HEK293 (cell line): ENCODE measurements at regions of chr20 and their contacts with region 1.

Region 1: DNA sequence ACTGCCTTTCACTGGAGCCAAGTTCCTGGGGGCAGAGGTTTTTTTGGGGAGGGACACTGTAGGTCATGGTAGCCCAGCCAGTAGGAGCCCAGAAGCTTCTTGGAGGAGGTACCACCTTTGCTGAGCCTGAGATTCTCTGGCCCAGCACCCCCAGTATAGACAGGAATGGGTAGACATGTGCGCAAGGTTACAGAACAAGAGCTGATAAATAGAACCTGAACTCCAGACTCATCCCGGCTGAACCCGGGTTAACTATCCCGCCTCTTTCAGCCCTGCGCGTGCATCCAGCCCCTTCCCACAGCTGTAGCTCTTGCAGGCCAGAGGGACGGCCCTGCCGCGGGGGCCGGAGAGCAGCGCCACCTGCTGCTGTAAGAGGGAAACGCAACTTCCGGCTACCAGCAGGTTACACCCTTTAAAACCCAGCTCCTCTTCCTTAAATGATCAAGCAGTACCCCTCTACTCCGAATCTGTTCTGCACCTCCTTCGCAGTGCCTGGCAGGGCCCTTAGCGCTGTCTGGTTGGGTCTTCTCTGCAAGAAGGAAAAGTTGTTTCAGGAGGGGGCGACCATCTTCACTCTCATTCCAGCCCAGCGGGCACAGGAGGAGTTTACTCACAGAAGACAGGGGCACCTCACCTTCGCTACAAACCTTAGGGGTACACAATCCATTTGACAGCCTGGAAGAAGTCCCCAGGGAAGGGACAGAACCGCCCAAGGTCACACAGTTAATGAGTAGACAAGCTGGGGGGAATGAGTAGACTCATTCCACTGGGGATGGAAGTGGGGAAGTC is 7.5 kb downstream of the SRXN1 start:
- H3K4me3 ChIP-seq: no peak overlapping the region
- H3K27ac ChIP-seq: no peak overlapping the region
- H3K4me1 ChIP-seq: no peaks in the 10 kb centered on the region
- CTCF ChIP-seq: peak; percentile 96

Region 2: DNA sequence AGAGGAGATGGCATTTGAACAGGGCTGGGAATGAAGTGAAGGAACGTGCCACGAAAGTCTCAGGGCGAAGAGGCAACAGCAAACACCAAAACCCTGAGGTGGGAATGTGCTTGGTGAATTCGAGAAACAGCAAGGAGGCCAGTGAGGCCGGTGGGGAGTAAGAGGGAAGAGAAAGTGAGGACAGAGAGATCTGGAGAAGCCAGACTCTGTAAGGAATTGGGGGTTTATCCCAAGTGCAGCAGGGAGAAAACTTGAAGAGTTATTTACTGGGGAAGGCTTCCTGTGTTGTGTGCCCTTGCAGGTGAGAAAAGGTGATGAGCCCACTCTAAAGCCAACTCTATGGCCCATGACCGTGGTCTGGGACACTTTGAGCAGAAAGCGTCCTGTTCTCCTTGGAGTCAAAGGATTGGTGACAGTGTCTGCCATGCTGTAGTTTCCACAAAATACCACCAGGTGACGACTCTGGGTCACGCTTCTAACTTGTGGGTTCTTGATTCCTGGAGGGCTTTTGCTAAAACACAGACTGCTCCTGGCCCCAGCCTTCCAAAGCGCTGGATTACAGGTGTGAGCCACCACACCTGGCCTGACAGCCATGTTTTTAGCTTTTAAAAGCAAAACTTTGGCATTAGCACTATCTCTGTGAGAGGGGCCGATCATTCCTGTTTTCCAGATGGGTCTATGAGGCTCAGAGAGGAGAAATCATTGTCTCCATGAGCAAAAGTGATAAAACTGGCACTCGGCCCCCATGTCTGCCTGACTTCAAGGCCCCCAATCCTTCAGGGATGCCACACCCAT is 83.9 kb before region 1 on chr20:
- CTCF ChIA-PET with region 1: interaction called, 130 read pairs
- POLR2A ChIA-PET with region 1: interaction called, 4 read pairs
- H3K4me3 ChIP-seq: no peak overlapping the region
- H3K27ac ChIP-seq: no peak overlapping the region
- H3K4me1 ChIP-seq: no peaks in the 10 kb centered on the region
- CTCF ChIP-seq: peak; percentile 83

Region 3: DNA sequence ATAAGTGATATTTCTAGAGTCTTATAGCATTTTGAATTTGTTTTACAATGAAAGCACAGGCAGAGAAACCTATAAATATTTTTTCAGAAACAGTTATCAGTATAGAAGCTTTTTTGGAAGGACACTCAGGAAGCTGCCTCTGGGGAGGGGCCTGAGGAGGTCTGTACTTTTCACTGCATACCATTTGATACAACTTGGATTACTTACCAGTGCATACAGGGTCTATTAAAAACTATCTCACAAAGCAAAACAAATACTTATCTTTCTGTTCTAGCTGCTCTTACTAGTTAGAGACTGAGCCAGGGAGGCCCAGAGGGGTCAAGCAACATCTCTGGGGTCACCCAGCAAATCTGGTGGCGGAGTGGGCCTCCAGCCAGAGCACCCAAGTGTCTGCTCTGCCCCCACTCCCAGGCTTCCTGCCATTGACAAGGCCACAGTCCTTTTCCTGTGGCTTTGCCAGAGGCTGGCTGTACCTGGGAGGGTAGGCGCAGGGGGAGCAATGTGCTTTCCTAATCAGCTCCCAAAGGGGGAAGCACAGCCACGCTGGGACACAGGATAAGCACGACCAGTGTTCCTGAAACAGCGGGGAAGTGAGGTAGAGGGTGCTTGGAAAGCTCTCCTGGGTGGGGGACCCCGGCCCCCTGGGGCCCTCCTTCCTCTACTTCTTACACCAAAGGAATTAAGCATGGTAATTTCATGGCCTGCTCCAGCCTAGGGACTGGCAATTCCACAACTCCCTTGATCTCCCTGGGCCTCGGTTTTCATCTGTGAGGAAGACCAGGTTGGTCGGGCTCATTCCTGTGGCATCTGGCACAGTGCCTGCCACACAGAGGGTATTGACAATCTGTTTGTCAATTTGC is 43.2 kb before region 1 on chr20:
- CTCF ChIA-PET with region 1: interaction called, 11 read pairs
- POLR2A ChIA-PET with region 1: interaction called, 3 read pairs
- H3K4me3 ChIP-seq: no peak overlapping the region
- H3K27ac ChIP-seq: no peak overlapping the region
- H3K4me1 ChIP-seq: no peaks in the 10 kb centered on the region
- CTCF ChIP-seq: no peak

Region 4: GRCh38 chr20:634556-634955 is 11.0 kb before region 1 on chr20:
- CTCF ChIA-PET with region 1: interaction called, 19 read pairs
- POLR2A ChIA-PET with region 1: no interaction called
- H3K4me3 ChIP-seq: no peak overlapping the region
- H3K27ac ChIP-seq: no peak overlapping the region
- H3K4me1 ChIP-seq: no peaks in the 10 kb centered on the region
- CTCF ChIP-seq: no peak

Region 5: DNA sequence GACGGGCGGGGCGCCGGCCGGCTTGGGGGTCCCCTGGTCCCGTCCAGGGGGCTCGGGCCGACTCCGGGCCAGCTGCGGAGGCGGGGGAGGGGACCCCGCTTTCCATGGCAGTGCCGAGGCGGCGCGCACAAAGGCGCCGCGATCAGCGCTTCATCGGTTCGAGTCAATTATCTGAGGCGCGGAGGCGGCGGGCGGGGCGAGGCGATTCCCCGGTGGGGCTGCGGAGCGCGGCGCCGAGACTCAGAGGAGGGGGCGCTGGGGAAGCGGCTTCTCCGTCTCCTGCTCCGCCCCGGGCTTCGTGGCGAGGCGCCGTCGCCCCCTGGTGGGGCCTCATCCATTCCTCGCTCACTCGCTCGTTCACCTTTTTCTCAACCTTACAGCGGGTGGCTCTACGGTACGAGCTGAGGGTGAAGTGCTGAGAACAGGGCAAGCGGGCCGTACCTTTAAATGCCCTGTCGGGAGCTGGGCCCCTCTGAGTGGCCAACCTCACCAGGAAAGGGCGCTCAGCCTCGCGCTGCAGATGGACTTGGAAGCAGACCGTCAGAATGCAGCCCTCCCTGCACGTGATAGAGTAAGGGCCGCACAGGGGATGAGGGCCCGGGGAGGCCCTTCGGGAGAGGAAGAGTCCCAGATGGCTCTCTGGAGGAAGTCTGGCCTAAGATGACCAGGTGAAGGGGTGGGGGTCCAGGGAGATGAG is 82.9 kb after region 1 on chr20:
- CTCF ChIA-PET with region 1: interaction called, 12 read pairs
- POLR2A ChIA-PET with region 1: no interaction called
- H3K4me3 ChIP-seq: peak overlapping the region; percentile 30
- H3K27ac ChIP-seq: no peak overlapping the region
- H3K4me1 ChIP-seq: no peaks in the 10 kb centered on the region
- CTCF ChIP-seq: peak; percentile 96